Naive thymus-derived CD4-positive, alpha-beta T cell (primary cell): ENCODE measurements at regions of chr2 and their contacts with region 1.

Region 1: GRCh38 chr2:73828818-73829570 is at the start of gene STAMBP:
- DNase-seq: peak; percentile 67 to 95 (median 86)
- ATAC-seq: peak; percentile 96
- H3K4me3 ChIP-seq: peak within 1 kb of the TSS; percentile 81
- H3K4me3 Mint-ChIP-seq: peak within 1 kb of the TSS; percentile 93 to 99 (median 97)
- H3K27ac ChIP-seq: peak within 1 kb of the TSS; percentile 97
- H3K27ac Mint-ChIP-seq: peak within 1 kb of the TSS; percentile 88 to 99 (median 95)
- H3K4me1 ChIP-seq: peaks cover 22 to 25% of the 10 kb centered on the region in 2 donors
- H3K4me1 Mint-ChIP-seq: peaks cover 24 to 58% (median 52%) of the 10 kb centered on the region in 7 donors
- H3K27me3 ChIP-seq: no peaks in the 10 kb centered on the region
- H3K27me3 Mint-ChIP-seq: peaks cover 0 to 3% (median 0%) of the 10 kb centered on the region in 5 donors
- total RNA-seq, gene STAMBP: 22.2 to 44.5 (median 32.9) TPM

Region 2: GRCh38 chr2:73736855-73737779 is 91.9 kb before region 1 on chr2 and contains the start of gene TPRKB:
- CTCF ChIA-PET with region 1: no interaction called
- POLR2A ChIA-PET with region 1: interaction called, 6 read pairs
- intact Hi-C with region 1: loop called in 1 of 2 experiments (anchors 1 kb)
- DNase-seq: peak; percentile 73 to 95 (median 94)
- ATAC-seq: peak; percentile 99
- H3K4me3 ChIP-seq: peak within 1 kb of the TSS; percentile 78
- H3K4me3 Mint-ChIP-seq: peak within 1 kb of the TSS; percentile 92 to 98 (median 98)
- H3K27ac ChIP-seq: peak within 1 kb of the TSS; percentile 67
- H3K27ac Mint-ChIP-seq: peak within 1 kb of the TSS; percentile 85 to 97 (median 91)
- H3K4me1 ChIP-seq: peaks cover 8 to 14% of the 10 kb centered on the region in 2 donors
- H3K4me1 Mint-ChIP-seq: peaks cover 10 to 31% (median 21%) of the 10 kb centered on the region in 7 donors
- H3K27me3 ChIP-seq: no peaks in the 10 kb centered on the region
- H3K27me3 Mint-ChIP-seq: peaks cover 0 to 2% (median 0%) of the 10 kb centered on the region in 5 donors
- total RNA-seq, gene TPRKB: 16.5 to 34.6 (median 27.5) TPM

Region 3: GRCh38 chr2:73851274-73851673 is 22.3 kb after region 1 on chr2:
- CTCF ChIA-PET with region 1: no interaction called
- POLR2A ChIA-PET with region 1: no interaction called
- intact Hi-C with region 1: loop called in 1 of 2 experiments (anchors 2 kb)
- DNase-seq: peak in 1 of 9 donors; percentile 15
- ATAC-seq: no peak
- H3K4me3 ChIP-seq: no peak overlapping the region
- H3K4me3 Mint-ChIP-seq: no peak overlapping the region
- H3K27ac ChIP-seq: no peak overlapping the region
- H3K27ac Mint-ChIP-seq: no peak overlapping the region
- H3K4me1 ChIP-seq: no peaks in the 10 kb centered on the region
- H3K4me1 Mint-ChIP-seq: peaks cover 0 to 3% (median 0%) of the 10 kb centered on the region in 7 donors
- H3K27me3 ChIP-seq: no peaks in the 10 kb centered on the region
- H3K27me3 Mint-ChIP-seq: no peaks in the 10 kb centered on the region

Region 4: DNA sequence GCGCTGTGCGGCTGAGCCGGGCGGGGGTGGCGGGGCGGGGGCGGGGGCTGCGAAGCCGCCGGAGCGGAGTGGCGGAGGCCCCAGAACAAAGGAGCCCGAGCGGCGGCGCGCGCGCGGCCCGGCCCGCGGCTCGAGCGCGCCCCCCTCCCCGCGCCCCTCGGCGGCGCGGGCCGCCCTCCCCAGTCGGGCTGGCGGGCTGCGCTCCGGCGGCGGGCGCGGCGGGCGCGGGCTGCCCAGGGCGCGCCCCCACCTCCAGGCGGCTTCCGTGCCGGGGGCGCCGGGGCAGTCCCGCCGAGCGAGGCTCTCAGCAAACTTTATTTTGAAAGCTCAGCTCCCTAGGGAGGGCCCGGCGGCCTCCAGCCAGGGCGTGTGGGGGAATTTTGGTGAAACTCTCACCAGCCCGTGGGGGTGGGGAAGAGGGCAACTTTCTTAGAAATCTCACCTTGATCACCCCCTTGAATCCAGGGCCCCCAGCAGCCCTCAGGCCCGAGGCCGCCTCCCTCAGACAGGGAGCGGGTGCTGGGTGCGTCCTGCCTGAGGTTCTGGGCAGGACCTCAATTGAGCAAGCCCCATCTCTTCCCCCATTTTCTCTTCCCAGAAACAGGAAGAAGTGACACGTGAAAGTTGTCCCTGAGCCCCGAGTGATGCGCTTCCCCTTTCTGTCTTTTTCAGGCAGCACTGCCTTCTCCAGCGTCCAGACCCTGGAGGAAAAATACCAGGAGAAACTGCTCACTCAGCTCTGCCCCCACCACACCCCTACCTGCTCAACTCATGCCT is 156.5 kb after region 1 on chr2:
- CTCF ChIA-PET with region 1: interaction called, 3 read pairs
- POLR2A ChIA-PET with region 1: interaction called, 4 read pairs
- intact Hi-C with region 1: loop called (anchors 1 to 2 kb)
- DNase-seq: peak in 8 of 9 donors; percentile 43 to 78 (median 52)
- ATAC-seq: peak; percentile 63
- H3K4me3 ChIP-seq: peak overlapping the region; percentile 62
- H3K4me3 Mint-ChIP-seq: peak overlapping the region; percentile 83 to 93 (median 88)
- H3K27ac ChIP-seq: peak overlapping the region; percentile 90
- H3K27ac Mint-ChIP-seq: peak overlapping the region; percentile 66 to 94 (median 87)
- H3K4me1 ChIP-seq: peaks cover 40 to 63% of the 10 kb centered on the region in 2 donors
- H3K4me1 Mint-ChIP-seq: peaks cover 64 to 85% (median 81%) of the 10 kb centered on the region in 7 donors
- H3K27me3 ChIP-seq: no peaks in the 10 kb centered on the region
- H3K27me3 Mint-ChIP-seq: peaks cover 0 to 28% (median 0%) of the 10 kb centered on the region in 5 donors

Region 5: DNA sequence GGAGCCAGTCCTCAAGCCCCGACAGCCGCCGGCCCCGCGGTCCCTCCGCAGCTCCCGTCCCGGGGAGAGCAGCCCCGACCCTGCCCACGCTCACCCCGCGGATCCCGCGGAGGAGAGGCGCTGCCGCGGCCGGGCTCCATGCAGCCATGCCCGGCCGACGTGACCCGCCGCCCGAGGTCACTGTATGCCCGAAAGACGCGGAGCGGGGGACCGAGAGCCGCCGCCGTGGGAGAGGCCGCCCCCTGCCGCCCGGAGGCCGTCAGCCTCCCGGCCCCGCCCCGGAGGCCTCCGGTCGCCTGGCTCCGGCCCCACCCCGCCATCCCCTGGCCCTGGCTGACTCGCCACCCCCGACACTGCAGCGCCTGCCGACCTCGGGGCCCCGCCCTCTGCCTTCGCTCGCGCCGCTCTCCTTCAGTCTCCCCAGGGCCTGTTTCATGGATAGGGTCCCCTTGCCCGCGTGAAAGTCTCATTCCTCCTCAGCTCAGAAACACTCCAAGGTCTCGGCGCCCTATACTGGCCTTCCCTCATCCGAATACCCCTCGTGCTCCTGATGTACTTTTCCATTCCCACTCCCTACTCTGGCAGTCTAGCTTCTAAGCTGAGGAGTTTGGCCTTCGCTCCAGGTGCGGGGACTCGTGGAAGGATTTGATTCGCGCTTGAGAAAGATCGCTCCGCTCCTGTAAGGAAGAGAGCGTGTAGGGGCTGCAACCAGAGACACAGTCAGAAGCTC is 318.9 kb after region 1 on chr2 and contains the start of gene BOLA3:
- CTCF ChIA-PET with region 1: interaction called, 7 read pairs
- POLR2A ChIA-PET with region 1: interaction called, 5 read pairs
- intact Hi-C with region 1: loop called (anchors 1 to 10 kb)
- DNase-seq: peak; percentile 55 to 93 (median 70)
- ATAC-seq: peak; percentile 95
- H3K4me3 ChIP-seq: peak within 1 kb of the TSS; percentile 72
- H3K4me3 Mint-ChIP-seq: no peak within 1 kb of the TSS
- H3K27ac ChIP-seq: peak within 1 kb of the TSS; percentile 72
- H3K27ac Mint-ChIP-seq: no peak within 1 kb of the TSS
- H3K4me1 ChIP-seq: peaks cover 14 to 15% of the 10 kb centered on the region in 2 donors
- H3K4me1 Mint-ChIP-seq: peaks cover 0 to 15% (median 0%) of the 10 kb centered on the region in 7 donors
- H3K27me3 ChIP-seq: no peaks in the 10 kb centered on the region
- H3K27me3 Mint-ChIP-seq: no peaks in the 10 kb centered on the region
- total RNA-seq, gene BOLA3: 6.9 to 54.8 (median 13.7) TPM

Region 6: GRCh38 chr2:74250189-74250631 is 421.2 kb after region 1 on chr2:
- CTCF ChIA-PET with region 1: interaction called, 5 read pairs
- POLR2A ChIA-PET with region 1: no interaction called
- intact Hi-C with region 1: loop called in 1 of 2 experiments (anchors 1 kb)
- DNase-seq: peak; percentile 33 to 65 (median 54)
- ATAC-seq: peak; percentile 70
- H3K4me3 ChIP-seq: no peak overlapping the region
- H3K4me3 Mint-ChIP-seq: peak overlapping the region in 1 of 10 donors; percentile 49
- H3K27ac ChIP-seq: no peak overlapping the region
- H3K27ac Mint-ChIP-seq: peak overlapping the region in 2 of 9 donors; percentile 62 to 84
- H3K4me1 ChIP-seq: no peaks in the 10 kb centered on the region
- H3K4me1 Mint-ChIP-seq: peaks cover 0 to 6% (median 0%) of the 10 kb centered on the region in 7 donors
- H3K27me3 ChIP-seq: no peaks in the 10 kb centered on the region
- H3K27me3 Mint-ChIP-seq: no peaks in the 10 kb centered on the region

Region 7: DNA sequence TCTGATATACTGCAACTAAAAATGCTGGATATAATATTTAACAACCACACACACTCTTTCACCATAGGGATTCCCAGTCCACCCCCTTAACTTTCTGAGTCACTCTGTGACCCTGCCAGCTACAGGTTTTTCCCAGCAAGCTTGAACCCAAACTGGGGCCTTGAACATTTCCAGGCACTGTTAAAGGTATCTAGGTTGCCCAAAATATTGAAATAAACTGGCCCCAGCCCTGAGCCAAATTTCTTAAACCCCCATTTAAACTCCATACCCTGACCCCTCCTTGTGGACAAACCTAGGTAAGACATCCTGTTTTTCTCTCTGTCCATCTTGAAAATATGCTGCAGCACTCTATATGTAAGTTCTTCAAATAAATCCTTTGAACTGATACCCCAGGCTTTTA is 570.8 kb after region 1 on chr2:
- CTCF ChIA-PET with region 1: interaction called, 11 read pairs
- POLR2A ChIA-PET with region 1: no interaction called
- intact Hi-C with region 1: no loop called
- DNase-seq: peak in 5 of 9 donors; percentile 36 to 47 (median 42)
- ATAC-seq: peak; percentile 86
- H3K4me3 ChIP-seq: no peak overlapping the region
- H3K4me3 Mint-ChIP-seq: no peak overlapping the region
- H3K27ac ChIP-seq: no peak overlapping the region
- H3K27ac Mint-ChIP-seq: peak overlapping the region in 2 of 9 donors; percentile 8 to 28
- H3K4me1 ChIP-seq: no peaks in the 10 kb centered on the region
- H3K4me1 Mint-ChIP-seq: peaks cover 0 to 6% (median 5%) of the 10 kb centered on the region in 7 donors
- H3K27me3 ChIP-seq: no peaks in the 10 kb centered on the region
- H3K27me3 Mint-ChIP-seq: peaks cover 0 to 21% (median 4%) of the 10 kb centered on the region in 5 donors